Dorsolateral prefrontal cortex (tissue), 120 donors: ENCODE measurements at regions of chrX and their contacts with region 1.

Region 1: DNA sequence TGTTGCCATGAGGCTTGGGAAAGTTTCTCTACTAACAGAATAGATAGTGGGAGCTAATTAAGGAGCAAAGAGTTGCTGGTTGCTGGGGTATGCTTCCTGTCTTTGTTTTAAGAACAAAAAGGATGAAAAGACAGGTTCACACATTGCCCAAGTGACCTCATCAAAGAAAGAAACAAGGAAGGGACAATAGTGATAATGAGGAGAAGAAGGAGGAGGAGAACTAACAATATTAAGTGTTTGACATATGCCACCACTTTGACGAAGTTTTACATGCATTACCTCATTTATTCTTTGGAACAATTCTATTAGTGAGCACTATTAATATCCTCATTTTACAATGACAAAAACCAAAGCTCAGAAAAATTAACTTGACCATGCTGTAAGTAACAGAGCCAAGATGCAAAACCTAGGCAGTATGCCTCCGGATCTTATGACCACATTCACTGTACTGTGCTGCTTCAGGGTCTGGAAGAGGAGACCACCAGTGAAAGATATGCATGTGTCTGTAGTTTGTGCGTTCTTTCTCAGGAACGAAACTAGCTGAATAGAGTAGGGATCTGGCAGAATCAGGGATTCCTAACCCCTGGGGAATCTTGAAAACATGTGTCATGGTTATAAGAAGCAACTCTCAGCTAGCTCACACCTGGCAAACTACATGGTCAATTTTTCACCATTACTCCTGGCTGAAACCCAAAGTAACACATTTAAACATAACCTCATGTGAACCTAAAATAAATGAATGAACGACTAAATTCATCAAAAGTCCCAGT is 83.8 kb downstream of the MOSPD2 start:
- DNase-seq: no peak
- H3K4me3 ChIP-seq: no peak overlapping the region
- H3K27ac ChIP-seq: no peak overlapping the region
- H3K27me3 ChIP-seq: peaks cover 0 to 69% (median 8%) of the 10 kb centered on the region in 45 donors
- CTCF ChIP-seq: no peak

Region 2: DNA sequence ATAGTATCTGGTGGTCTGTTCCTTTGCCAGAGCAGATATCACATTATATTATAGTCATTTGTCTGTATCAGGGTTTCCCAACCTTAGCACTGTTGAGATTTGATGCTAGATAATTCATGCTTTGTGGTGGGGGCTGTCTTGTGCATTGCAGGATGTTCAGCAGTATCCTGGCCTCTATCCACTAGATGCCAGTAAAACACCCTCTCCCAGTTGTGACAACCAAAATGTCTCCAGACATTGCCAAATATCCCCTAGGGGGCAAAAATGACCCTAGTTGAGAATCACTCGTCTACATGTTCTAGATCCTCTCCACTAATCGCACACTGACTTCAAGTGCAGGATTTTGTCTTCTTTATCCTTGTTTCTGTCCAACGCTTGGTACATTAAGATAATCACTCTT is 244.9 kb before region 1 on chrX:
- intact Hi-C with region 1: loop called in 1 of 2 experiments (anchors 10 kb)
- DNase-seq: no peak
- H3K4me3 ChIP-seq: no peak overlapping the region
- H3K27ac ChIP-seq: no peak overlapping the region
- H3K27me3 ChIP-seq: peaks cover 0 to 67% (median 11%) of the 10 kb centered on the region in 45 donors
- CTCF ChIP-seq: peak in 17 of 56 donors; percentile 9 to 38 (median 21)

Region 3: GRCh38 chrX:15245896-15246295 is 288.9 kb after region 1 on chrX:
- intact Hi-C with region 1: no loop called
- DNase-seq: no peak
- H3K4me3 ChIP-seq: no peak overlapping the region
- H3K27ac ChIP-seq: no peak overlapping the region
- H3K27me3 ChIP-seq: peaks cover 0 to 85% (median 18%) of the 10 kb centered on the region in 45 donors
- CTCF ChIP-seq: no peak